Right ventricle myocardium inferior (tissue), 1 donor: ENCODE measurements at regions of chr5 and their contacts with region 1.

Region 1: DNA sequence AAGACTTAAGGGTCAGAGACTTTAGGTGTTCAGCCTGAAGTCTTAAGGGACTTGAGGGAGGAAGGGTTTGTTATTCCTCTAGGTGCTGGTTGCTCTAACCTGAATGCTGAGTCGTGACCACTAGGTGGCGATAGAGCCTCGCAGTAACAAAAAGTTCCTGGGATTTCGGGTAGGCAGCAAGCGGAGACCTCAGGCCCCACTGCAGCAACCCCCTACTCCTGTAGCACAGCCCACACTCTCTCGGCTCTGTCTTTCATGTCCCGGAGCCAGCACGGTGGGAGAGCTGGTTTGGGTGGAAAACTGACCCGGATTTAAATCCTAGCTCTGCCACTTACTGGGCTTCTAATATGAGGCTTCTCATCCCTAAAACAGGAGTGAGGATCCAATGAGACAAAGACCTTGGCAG is 100.3 kb upstream of the PANK3 start:
- DNase-seq: peak; percentile 73
- ATAC-seq: peak; percentile 41

Region 2: DNA sequence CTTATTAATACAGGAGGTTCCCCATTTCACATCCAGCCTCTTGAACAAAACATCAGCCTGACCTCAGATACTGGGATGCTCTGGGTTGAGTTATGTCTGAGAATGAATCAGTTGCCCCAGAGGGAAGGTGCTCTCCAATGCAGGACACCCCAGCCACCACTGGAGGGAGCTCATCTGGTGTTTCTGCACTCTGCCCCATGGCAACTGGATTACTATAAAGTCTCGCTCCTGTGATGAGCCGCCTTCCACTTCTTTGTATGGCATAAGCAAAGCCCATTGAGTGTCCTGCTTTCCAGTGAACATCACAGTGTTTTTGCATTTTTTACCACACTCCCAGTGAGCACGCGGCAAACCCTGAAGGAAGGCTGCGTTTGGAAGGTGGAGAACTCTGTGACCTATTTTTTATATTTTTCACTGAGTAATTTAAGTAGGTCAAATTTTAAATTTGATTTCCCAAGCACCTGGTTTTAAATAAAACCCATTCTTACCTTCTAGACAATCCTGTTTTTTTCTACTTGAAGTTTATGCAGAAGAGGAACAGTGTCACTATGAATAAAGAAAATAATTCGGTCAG is 565.0 kb before region 1 on chr5:
- intact Hi-C with region 1: no loop called
- DNase-seq: no peak
- ATAC-seq: peak; percentile 57

Region 3: GRCh38 chr5:168612996-168613395 is 66.5 kb before region 1 on chr5:
- intact Hi-C with region 1: no loop called
- DNase-seq: no peak
- ATAC-seq: peak; percentile 39

Region 4: GRCh38 chr5:168947212-168947868 is 267.8 kb after region 1 on chr5:
- intact Hi-C with region 1: loop called (anchors 2 kb)
- DNase-seq: no peak
- ATAC-seq: no peak